ENCODE measurements at regions of chr3 and their contacts with region 1.

Region 1: DNA sequence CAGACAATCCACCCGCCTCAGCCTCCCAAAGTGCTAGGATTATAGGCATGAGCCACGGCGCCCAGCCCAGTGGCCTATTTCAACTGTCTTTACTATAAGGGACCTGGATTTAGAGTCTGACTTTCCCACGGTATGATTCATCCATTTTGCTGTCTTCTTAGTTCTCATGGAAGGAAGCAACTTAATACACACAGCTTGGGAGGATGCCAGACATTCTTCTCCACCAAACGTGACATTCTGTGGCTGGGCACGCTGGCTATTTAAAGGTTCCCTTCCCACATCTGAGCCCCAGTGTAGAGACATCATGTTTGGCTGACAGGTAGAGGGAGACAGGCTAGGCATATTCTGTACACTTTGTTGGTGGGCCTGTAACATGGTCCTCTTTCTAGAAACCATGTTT is 26.2 kb downstream of the FAM43A start:
- DNase-seq: no peak
- ATAC-seq: no peak

Region 2: DNA sequence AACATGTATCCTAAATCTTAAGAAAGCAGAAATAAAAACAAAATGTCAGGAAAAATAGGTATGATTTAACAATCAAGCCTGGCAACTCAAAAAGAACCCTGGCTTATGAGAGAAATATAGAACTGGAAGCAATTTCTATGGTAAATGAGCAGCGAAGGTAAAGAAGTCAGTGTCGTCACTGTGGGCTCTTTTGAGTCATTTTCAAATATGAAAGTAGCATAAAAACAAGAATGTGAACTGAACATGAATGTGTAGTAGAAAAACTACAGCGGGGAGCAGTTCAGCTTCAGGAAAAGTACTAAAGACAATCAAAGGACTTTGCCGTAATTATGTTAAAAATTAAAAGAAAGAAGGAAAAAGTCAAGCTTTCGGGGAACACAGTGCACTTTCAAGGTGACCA is 57.5 kb before region 1 on chr3:
- intact Hi-C with region 1: loop called (anchors 2 kb)
- DNase-seq: no peak
- ATAC-seq: no peak

Region 3: GRCh38 chr3:195259475-195260279 is 547.8 kb after region 1 on chr3:
- intact Hi-C with region 1: no loop called
- DNase-seq: peak; percentile 93
- ATAC-seq: peak; percentile 88